Calu3 (cell line): ENCODE measurements at regions of chr15 and their contacts with region 1.

Region 1: DNA sequence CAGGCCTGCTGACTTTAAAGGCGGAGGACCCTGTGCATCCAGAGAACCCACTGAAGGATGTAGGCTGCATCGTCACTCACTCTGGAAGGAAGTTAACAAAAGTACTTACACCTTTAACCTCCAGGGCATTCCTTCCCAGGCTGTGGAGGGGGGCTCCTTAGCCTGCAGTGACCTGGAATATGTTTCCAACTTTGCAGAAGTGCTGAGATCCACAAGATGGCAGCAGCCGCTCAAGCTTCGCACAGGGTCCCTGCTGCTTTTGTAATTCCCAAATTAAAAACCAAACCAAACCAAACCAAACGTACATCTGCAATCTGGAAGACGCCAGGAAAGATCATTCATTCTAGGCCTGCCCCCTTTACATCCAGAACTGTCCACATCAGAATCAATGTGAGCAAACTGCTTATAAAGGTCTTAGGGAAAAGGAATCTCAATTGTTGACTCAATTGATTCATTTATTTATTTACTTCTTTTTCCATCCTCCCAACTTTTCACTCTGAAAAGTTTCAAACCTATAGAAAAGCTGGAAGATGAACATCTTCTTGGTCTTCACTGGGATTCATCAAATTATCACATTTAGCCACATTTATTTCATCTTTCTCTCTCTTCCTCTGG is 70.5 kb upstream of the KLHL25 start:
- DNase-seq: peak; percentile 39
- H3K4me3 Mint-ChIP-seq: no peak overlapping the region
- H3K27ac Mint-ChIP-seq: no peak overlapping the region
- H3K4me1 Mint-ChIP-seq: no peaks in the 10 kb centered on the region
- H3K27me3 Mint-ChIP-seq: peaks cover 81% of the 10 kb centered on the region
- CTCF ChIP-seq: peak; percentile 58

Region 2: GRCh38 chr15:86178845-86179244 is 313.7 kb after region 1 on chr15:
- CTCF ChIA-PET with region 1: no interaction called
- intact Hi-C with region 1: loop called (anchors 2 kb)
- DNase-seq: no peak
- H3K4me3 Mint-ChIP-seq: no peak overlapping the region
- H3K27ac Mint-ChIP-seq: no peak overlapping the region
- H3K4me1 Mint-ChIP-seq: no peaks in the 10 kb centered on the region
- H3K27me3 Mint-ChIP-seq: no peaks in the 10 kb centered on the region
- CTCF ChIP-seq: no peak